Endothelial cell of umbilical vein (primary cell): ENCODE measurements at regions of chr1 and their contacts with region 1.

Region 1: DNA sequence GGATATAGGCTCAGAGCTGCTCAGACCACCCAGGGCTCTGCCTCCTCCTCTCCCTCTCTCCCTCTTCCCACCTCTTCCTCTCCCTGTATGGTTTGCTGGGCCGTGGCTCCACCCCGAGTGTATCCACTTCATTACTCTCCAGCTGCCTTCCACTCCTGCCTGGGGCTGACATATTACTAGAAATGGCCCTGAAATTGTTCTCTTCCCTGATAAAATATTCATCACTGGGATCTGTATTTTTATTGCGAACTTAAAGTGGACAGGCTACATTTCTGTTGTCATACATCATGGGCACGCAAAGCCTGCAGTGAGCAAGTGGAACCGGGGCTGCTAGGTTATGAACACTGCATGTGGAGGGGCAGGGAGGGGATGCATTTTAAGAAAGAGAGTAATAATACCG is 225.0 kb downstream of the HHAT start:
- DNase-seq: no peak
- H3K4me3 ChIP-seq: no peak overlapping the region
- H3K27ac ChIP-seq: no peak overlapping the region
- H3K4me1 ChIP-seq: no peaks in the 10 kb centered on the region
- H3K27me3 ChIP-seq: no peaks in the 10 kb centered on the region
- CTCF ChIP-seq: no peak
- POLR2A ChIP-seq: no peak

Region 2: GRCh38 chr1:210505601-210506496 is 47.9 kb before region 1 on chr1:
- CTCF ChIA-PET with region 1: interaction called, 3 read pairs
- POLR2A ChIA-PET with region 1: no interaction called
- dilution Hi-C with region 1: no loop called
- intact Hi-C with region 1: loop called (anchors 5 kb)
- DNase-seq: no peak
- H3K4me3 ChIP-seq: no peak overlapping the region
- H3K27ac ChIP-seq: no peak overlapping the region
- H3K4me1 ChIP-seq: no peaks in the 10 kb centered on the region
- H3K27me3 ChIP-seq: no peaks in the 10 kb centered on the region
- CTCF ChIP-seq: no peak
- POLR2A ChIP-seq: no peak

Region 3: DNA sequence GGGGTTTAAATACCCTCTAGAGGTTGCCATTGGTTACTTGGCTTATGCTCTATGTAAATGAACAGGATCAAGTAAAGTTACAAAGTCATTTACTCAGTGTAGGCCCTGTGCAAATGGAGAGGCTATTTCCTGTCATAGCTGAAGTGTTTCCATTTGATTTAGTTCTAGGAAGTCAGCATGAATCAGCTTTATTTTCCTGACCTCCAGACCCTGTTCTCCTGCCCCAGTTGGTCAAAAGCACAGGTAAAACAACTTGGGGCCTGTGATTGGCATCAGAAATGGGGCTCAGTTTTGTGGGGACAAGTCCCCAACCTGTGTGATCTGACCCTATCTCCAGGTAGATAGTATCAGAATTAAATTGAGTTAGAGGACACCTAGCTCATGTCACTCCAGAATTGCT is 14.9 kb after region 1 on chr1:
- CTCF ChIA-PET with region 1: no interaction called
- POLR2A ChIA-PET with region 1: no interaction called
- dilution Hi-C with region 1: no loop called
- intact Hi-C with region 1: no loop called
- DNase-seq: no peak
- H3K4me3 ChIP-seq: no peak overlapping the region
- H3K27ac ChIP-seq: no peak overlapping the region
- H3K4me1 ChIP-seq: no peaks in the 10 kb centered on the region
- H3K27me3 ChIP-seq: no peaks in the 10 kb centered on the region
- CTCF ChIP-seq: no peak
- POLR2A ChIP-seq: no peak